WTC11 (cell line): ENCODE measurements at regions of chr2 and their contacts with region 1.

Region 1: GRCh38 chr2:101725515-101726192 is 28.1 kb downstream of the MAP4K4 start:
- DNase-seq: peak; percentile 36
- ATAC-seq: peak; percentile 75
- H3K4me3 Mint-ChIP-seq: no peak overlapping the region
- H3K27ac Mint-ChIP-seq: no peak overlapping the region
- H3K4me1 Mint-ChIP-seq: peaks cover 50% of the 10 kb centered on the region
- H3K27me3 Mint-ChIP-seq: no peaks in the 10 kb centered on the region
- CTCF ChIP-seq: 0 out of 2 replicates have a peak, but pooled peaks have one; percentile 24

Region 2: DNA sequence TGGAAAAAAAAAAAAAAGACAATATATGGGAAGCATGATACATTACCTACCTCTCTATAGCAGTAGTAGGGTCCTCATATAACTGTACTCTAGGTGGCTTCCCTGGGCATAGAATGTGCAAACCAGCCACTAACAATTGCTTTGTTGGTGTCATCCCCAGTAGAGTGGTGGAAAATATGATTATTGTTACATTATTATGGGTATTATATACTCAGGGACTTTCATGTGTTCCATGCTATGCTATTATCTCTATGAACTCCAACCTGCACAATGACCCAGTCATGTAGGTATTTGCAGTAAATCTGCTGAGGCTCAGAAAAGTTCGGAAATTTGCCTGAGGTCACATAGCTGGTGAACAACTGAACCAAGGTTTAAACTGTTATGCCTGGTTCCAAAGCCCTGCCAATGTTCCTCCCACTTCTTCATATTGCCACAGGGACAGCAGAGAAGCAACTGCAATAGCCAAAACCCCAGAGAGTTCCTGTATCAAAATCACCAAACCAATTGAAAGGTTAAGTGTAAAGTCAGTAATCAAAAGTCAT is 80.7 kb before region 1 on chr2:
- CTCF ChIA-PET with region 1: no interaction called
- POLR2A ChIA-PET with region 1: no interaction called
- DNase-seq: no peak
- ATAC-seq: no peak
- H3K4me3 Mint-ChIP-seq: no peak overlapping the region
- H3K27ac Mint-ChIP-seq: no peak overlapping the region
- H3K4me1 Mint-ChIP-seq: no peaks in the 10 kb centered on the region
- H3K27me3 Mint-ChIP-seq: no peaks in the 10 kb centered on the region
- CTCF ChIP-seq: no peak

Region 3: DNA sequence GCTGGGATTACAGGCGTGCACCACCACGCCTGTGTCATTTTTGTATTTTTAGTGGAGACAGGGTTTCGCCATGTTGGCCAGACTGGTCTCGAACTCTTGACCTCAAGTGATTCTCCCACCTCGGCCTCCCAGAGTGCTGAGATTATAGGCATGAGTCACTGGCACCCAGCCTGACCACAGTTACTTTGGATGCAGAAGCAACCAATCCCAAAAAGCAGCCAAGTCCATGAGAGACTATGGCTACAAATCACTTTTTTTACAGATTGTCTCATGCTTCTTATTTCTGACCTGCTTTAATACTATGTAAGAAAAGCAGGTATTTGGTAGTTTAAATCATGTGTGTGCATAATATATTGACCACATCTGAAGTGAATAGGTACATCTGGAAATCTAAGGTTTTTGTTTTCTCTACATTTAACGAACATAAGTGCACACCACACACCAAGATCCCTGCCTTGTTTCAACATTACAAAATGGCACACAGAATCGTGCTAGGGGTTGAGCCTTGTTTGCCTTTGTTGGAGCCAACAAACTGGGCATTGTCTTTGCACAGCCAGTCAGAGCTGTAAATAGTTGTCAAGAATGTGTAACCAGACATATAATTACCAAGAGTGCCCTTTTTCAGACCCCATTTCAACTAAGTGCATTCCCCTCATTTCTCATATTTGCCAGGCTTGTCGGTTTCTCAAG is 46.5 kb before region 1 on chr2:
- CTCF ChIA-PET with region 1: no interaction called
- POLR2A ChIA-PET with region 1: no interaction called
- DNase-seq: no peak
- ATAC-seq: no peak
- H3K4me3 Mint-ChIP-seq: no peak overlapping the region
- H3K27ac Mint-ChIP-seq: no peak overlapping the region
- H3K4me1 Mint-ChIP-seq: no peaks in the 10 kb centered on the region
- H3K27me3 Mint-ChIP-seq: no peaks in the 10 kb centered on the region; the same call in 1 of the 2 replicates
- CTCF ChIP-seq: no peak

Region 4: DNA sequence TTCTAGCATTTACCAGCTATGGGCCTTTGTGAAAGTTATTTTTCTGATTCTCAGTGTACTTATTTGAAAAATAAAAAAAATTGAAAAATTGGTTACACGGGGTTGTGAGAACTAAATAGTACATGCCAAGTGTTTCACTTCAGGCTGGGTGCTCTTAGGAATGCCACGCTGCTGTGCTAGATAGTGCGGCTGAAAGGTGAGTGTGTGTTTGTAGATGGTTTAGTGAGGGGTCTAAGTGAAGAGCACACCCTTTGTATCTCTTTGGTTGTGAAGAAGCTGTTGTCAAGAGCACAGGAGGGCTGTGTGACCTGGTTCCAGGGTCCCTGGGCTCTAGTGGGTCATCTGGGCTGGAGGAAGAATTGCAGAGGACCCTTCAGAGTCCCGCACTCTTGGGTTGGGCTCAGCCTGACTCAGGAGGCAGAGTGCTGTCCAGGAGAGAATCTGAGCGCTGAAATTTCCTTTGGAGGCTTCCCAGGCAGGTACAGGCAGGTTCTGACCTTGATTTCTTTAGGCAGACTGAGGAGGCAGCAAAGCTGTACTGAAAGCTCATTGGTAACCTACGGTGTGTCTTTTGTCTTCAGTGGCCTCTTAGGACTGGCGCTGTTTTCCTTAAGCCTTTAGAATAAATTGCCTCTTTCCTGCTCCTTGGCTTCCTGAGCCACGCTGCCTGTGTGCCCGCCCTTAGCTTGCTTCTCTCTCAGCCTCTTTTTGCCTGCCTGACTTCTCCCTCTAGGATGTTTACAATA is 16.3 kb after region 1 on chr2:
- CTCF ChIA-PET with region 1: interaction called, 12 read pairs
- POLR2A ChIA-PET with region 1: interaction called, 3 read pairs
- DNase-seq: peak; percentile 27
- ATAC-seq: peak; percentile 95
- H3K4me3 Mint-ChIP-seq: peak overlapping the region; percentile 49
- H3K27ac Mint-ChIP-seq: peak overlapping the region; percentile 97
- H3K4me1 Mint-ChIP-seq: peaks cover 87% of the 10 kb centered on the region
- H3K27me3 Mint-ChIP-seq: no peaks in the 10 kb centered on the region
- CTCF ChIP-seq: no peak